ENCODE measurements at regions of chr1 and their contacts with region 1.

Region 1: GRCh38 chr1:28602536-28603439 is 10.7 kb downstream of the RAB42 start:
- DNase-seq: no peak

Region 2: DNA sequence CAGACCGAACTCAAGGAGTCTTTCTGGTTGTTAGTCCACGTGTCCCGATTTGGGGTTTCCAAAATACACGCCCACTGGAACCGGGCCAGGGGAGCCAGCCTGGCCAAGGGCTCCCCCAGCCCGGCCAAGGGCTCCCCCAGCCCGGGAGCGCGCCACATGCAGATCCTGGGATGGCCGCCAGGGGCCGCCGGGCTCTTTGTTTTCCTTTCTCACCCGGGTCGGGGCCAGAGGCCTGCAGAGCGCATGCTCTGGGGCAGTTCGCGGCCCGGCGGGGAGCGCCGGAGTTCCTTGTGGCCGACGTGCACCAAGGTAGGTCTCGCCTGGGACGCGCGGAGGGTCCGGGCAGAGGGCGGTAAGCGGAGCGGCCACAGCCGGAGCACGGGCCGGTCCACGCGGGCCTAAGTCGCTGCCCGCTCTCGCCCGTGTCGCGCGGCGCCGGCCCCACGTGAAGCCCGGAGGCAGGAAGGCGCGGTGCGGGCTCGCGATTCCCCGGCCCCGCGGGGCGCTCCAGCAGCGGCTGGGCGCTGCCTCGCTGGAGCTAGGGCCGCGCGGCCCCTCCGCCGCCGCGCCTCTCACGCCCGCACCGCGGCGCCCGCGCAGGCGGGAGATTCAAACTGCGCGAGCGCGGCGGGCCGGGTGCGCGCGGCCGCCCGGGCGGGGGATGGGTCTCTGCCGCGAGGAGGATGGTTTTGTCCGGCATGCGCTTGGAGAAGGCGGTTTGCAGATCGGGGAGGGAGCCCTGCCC is 84.6 kb before region 1 on chr1:
- intact Hi-C with region 1: loop called (anchors 1 kb)
- DNase-seq: peak; percentile 96

Region 3: DNA sequence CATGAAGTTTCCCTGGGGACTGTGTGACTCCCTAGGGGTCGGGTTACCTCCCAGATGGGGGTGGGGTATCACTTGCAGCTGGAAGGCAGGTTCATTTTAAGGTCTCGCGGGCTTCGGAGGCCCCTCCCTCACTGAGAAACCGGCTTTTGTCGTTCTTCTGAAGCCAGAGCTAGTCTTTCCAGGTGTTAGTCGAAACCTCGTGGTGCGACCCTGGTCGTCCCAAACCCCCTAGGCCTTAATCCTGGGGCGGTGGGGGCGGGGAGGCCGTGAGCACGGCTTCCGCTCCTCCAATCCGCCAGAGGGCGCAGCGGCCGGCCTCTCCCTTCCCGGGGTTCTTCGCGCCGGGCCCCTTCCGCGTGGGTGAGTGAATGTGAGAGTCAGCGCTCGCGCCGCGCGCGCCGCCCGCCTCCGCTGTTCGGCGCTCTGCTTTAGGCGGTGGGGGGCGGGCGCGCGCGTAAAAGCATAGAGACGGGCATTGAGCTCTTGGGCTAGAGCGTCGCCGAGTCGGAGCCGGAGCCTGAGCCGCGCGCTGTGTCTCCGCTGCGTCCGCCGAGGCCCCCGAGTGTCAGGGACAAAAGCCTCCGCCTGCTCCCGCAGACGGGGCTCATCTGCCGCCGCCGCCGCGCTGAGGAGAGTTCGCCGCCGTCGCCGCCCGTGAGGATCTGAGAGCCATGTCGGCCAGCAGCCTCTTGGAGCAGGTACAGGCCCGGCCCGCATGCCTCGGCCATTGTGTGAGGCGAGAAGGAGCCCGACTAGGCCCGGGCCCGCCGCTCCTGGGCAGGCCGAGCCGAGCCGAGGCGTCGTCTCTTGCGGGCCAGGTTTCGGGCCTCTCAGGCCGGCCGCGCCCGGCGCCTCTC is 133.9 kb after region 1 on chr1 and contains the start of gene YTHDF2:
- intact Hi-C with region 1: no loop called
- DNase-seq: peak; percentile 98
- total RNA-seq, gene YTHDF2: 44.4 TPM

Region 4: DNA sequence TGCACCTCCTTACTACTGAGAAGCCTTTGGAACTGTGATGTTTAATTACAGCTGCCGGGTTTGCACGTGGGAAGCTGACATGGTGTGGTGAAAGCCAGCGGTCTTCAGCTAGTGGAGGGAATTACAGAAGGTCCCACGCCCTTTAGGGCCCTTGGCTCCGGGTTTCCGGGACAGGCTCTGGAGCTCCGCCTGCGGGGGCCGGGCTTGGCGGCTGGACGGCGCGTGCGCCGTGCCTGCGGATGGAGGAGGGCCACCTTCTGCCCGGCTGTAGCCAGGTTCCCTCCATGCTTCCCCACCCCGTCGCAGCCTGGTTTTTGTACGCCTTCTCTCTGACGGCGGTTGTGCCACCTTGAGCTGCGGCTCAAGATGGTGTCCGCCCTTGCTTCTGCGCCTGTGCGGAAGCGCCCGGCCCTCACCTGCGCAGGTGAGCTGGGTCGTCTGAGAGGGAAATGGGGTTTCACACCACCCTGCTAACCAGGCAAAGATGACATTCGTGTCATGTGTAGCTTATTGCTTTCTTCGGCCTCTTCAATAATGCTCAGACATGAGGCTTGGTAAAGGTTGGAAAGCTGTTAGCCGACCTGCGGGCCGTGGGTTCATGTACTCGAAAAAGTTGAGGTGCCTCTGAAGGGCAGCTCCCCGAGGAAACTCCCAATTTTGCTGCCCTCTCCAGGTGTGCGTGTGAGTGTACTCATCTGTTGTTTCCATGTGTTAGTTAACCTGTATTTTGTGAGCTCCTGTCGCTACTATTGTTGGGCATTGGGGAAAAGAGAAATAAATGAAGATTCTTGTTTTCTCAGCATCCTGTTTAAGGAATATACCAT is 172.5 kb after region 1 on chr1:
- intact Hi-C with region 1: no loop called
- DNase-seq: peak; percentile 92

Region 5: GRCh38 chr1:28971980-28972771 is 369.4 kb after region 1 on chr1:
- intact Hi-C with region 1: no loop called
- DNase-seq: no peak

Measured in cardiac septum (tissue), 1 donor.